GM12878 (cell line): ENCODE measurements at regions of chr11 and their contacts with region 1.

Region 1: DNA sequence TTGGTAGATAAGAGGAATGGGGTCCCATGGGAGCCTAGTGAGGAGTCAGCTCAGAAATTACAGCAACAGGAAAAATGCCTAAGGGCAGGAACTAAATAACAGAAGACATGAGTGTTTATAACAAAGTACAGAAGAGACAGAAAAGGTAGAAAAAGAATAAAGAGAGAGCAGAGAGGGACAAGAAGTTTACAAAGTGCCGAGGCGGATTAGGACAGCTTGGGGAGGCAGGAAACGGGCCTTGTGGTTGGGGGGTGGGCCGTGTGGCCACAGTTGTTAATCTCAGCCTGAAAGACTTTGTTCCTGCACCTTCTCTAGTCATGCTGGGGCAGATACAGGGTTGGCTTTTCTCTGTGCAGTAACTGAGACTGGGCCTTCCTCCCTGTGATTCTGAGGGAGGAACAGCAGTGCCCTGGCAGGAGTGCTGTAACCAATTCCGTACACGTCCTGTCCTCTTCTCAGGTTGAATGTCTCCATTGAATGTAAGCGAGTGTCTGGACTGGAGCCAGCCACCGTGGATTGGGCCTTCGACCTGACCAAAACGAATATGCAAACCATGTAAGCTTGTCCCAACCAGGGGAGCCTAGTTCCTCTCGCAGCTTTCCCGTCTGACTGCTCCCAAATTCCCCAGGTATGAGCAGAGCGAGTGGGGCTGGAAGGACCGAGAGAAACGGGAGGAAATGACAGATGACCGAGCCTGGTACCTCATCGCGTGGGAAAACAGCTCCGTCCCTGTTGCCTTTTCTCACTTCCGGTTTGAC is 13.2 kb downstream of the NAA40 start:
- DNase-seq: peak; percentile 65
- ATAC-seq: peak; percentile 96
- H3K4me3 ChIP-seq: peak overlapping the region; percentile 52; the same call in 1 of the 2 replicates
- H3K27ac ChIP-seq: peak overlapping the region; percentile 88
- H3K4me1 ChIP-seq: peaks cover 23% of the 10 kb centered on the region
- H3K27me3 ChIP-seq: no peaks in the 10 kb centered on the region
- CTCF ChIP-seq: no peak
- EP300 ChIP-seq: peak in 1 of 2 experiments; percentile 31; a peak in 1 of 4 replicates
- POLR2A ChIP-seq: peak; percentile 62
- RAD21 ChIP-seq: no peak

Region 2: DNA sequence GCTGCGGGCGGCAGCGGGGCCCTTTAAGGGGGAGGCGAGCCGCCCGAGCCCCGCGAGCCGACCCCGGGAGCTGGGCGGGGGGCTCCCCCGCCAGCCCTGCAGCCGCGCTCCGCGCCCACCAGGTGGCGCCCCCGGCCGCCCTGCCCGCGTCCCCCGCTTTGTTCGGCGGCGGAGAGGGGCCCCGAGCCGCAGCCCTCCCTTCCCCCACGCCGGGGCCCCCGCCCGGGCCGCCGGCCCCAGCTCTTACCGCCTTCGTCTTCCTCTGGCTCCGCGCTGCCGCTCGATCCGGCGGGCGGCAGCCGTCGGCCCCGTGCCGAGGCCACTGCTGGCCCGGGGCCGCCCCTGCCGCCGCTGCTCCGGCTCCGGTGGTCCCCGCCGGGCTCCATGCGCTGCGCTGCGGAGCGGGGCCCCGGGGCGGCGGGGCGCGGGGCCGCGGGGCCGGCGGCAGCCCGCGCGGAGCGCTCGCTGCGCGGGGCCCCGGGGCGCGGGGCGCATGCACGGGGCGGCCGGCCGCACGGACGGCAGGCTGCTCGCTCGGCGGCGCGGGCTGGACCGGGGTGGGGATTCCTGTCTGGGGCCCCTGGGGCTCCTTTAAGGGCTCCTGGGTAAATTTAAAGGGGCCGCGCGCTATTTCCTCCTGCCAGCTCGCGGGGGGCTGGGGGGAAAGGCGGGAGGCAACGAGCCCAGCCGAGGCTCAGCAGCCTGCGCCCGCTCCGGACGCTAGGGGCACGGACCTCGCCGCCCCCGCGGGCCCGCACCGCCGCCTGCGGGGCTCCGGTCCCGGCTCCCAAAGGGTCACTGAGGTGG is 183.5 kb before region 1 on chr11 and contains the start of gene ZFTA:
- CTCF ChIA-PET with region 1: interaction called, 3 read pairs
- POLR2A ChIA-PET with region 1: no interaction called
- RAD21 ChIA-PET with region 1: interaction called, 3 read pairs
- SMC1A ChIA-PET with region 1: interaction called, 3 read pairs
- in situ Hi-C with region 1: no loop called
- intact Hi-C with region 1: loop called (anchors 5 kb)
- DNase-seq: no peak
- ATAC-seq: peak; percentile 68
- H3K4me3 ChIP-seq: peak within 1 kb of the TSS; percentile 86
- H3K27ac ChIP-seq: peak within 1 kb of the TSS; percentile 44
- H3K4me1 ChIP-seq: peaks cover 8% of the 10 kb centered on the region; the same call in 1 of the 2 replicates
- H3K27me3 ChIP-seq: peaks cover 3 to 4% of the 10 kb centered on the region in 2 experiments
- CTCF ChIP-seq: peak; percentile 54 to 74 (median 65); a peak in 5 of 6 replicates
- EP300 ChIP-seq: no peak
- POLR2A ChIP-seq: peak; percentile 29; the same call in 1 of the 2 replicates
- RAD21 ChIP-seq: peak; percentile 75
- polyA plus RNA-seq, gene ZFTA: 0.39 to 0.99 TPM

Region 3: DNA sequence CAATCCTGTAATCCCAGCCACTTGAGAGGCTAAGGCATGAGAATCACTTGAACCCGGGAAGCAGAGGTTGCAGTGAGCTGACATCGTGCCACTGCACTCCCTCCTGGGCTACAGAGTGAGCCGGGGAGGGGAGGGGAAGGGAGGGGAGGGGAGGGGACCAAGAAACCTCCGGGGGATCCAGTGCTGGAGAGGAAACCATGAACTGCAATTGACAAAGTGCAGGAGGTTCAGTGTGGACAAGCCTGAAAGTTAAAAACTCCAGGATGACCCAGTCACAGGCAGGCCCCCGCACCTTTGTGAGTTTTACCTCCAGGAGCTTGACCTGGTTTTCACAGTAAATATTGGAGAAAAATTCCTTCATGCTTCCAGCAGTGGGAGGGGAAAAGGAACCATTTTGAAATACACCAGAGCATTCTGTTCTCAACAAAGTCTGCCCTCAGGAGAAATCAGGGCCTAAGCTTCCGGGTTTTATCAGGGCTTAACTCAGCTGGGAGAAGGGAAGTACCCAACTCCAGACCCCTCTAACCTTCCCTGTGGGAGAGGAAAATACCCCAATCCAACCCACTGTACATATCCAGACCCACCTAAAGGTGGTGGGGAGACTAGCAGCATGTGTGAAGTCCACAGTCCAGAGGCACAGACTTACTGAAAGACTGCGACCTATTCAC is 167.9 kb before region 1 on chr11:
- CTCF ChIA-PET with region 1: no interaction called
- POLR2A ChIA-PET with region 1: no interaction called
- RAD21 ChIA-PET with region 1: no interaction called
- SMC1A ChIA-PET with region 1: no interaction called
- in situ Hi-C with region 1: no loop called
- intact Hi-C with region 1: no loop called
- DNase-seq: no peak
- ATAC-seq: no peak
- H3K4me3 ChIP-seq: no peak overlapping the region
- H3K27ac ChIP-seq: no peak overlapping the region
- H3K4me1 ChIP-seq: no peaks in the 10 kb centered on the region
- H3K27me3 ChIP-seq: no peaks in the 10 kb centered on the region
- CTCF ChIP-seq: no peak
- EP300 ChIP-seq: no peak
- POLR2A ChIP-seq: no peak
- RAD21 ChIP-seq: no peak

Region 4: GRCh38 chr11:64036087-64037026 is 84.4 kb after region 1 on chr11:
- CTCF ChIA-PET with region 1: no interaction called
- POLR2A ChIA-PET with region 1: no interaction called
- RAD21 ChIA-PET with region 1: no interaction called
- SMC1A ChIA-PET with region 1: no interaction called
- in situ Hi-C with region 1: no loop called
- intact Hi-C with region 1: no loop called
- DNase-seq: no peak
- ATAC-seq: no peak
- H3K4me3 ChIP-seq: no peak overlapping the region
- H3K27ac ChIP-seq: no peak overlapping the region
- H3K4me1 ChIP-seq: no peaks in the 10 kb centered on the region
- H3K27me3 ChIP-seq: peaks cover 0 to 10% of the 10 kb centered on the region in 2 experiments; a peak in 3 of 4 replicates
- CTCF ChIP-seq: no peak
- EP300 ChIP-seq: no peak
- POLR2A ChIP-seq: no peak
- RAD21 ChIP-seq: no peak